HepG2 (cell line): ENCODE measurements at regions of chr17 and their contacts with region 1.

Region 1: GRCh38 chr17:65588176-65588808 is 26.8 kb upstream of the AXIN2 start:
- DNase-seq: peak; percentile 99
- ATAC-seq: peak; percentile 81
- H3K4me3 ChIP-seq: peak overlapping the region; percentile 3 to 47 (median 25); a peak in 3 of 6 replicates
- H3K27ac ChIP-seq: peak overlapping the region; percentile 14
- H3K4me1 ChIP-seq: peaks cover 82% of the 10 kb centered on the region
- H3K27me3 ChIP-seq: no peaks in the 10 kb centered on the region
- CTCF ChIP-seq: peak; percentile 58
- EP300 ChIP-seq: peak in 1 of 2 experiments; percentile 90; a peak in 2 of 4 replicates
- POLR2A ChIP-seq: no peak
- RAD21 ChIP-seq: peak; percentile 67; the same call in 1 of the 2 replicates

Region 2: GRCh38 chr17:65627891-65628659 is 39.8 kb after region 1 on chr17:
- CTCF ChIA-PET with region 1: no interaction called
- POLR2A ChIA-PET with region 1: interaction called, 12 read pairs
- in situ Hi-C with region 1: no loop called
- intact Hi-C with region 1: loop called (anchors 2 kb)
- DNase-seq: peak; percentile 91
- ATAC-seq: peak; percentile 97
- H3K4me3 ChIP-seq: peak overlapping the region in 1 of 3 experiments; percentile 12; a peak in 1 of 6 replicates
- H3K27ac ChIP-seq: peak overlapping the region; percentile 3
- H3K4me1 ChIP-seq: peaks cover 38% of the 10 kb centered on the region
- H3K27me3 ChIP-seq: no peaks in the 10 kb centered on the region
- CTCF ChIP-seq: no peak
- EP300 ChIP-seq: peak in 1 of 2 experiments; percentile 80; a peak in 2 of 4 replicates
- POLR2A ChIP-seq: no peak
- RAD21 ChIP-seq: no peak

Region 3: DNA sequence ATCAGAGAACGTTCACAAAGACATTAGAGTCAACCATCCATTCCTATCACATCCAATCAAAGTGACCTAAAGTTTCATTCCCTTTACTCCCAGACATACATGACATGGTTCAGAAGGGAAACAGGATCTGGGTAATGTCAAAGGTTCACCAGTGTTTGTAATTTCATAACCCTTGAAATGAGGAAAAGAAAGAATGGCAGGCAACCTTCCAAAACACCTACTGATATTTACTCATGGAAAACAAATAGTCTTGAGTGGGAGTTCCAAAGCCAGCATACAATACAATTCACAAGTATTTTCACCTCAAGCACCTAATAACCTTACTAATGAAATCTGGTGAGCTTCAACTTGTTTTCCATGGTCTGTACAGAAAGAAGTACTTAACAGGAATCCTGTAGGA is 45.7 kb after region 1 on chr17:
- CTCF ChIA-PET with region 1: no interaction called
- POLR2A ChIA-PET with region 1: interaction called, 12 read pairs
- in situ Hi-C with region 1: no loop called
- intact Hi-C with region 1: loop called (anchors 2 kb)
- DNase-seq: peak; percentile 89
- ATAC-seq: peak; percentile 55
- H3K4me3 ChIP-seq: peak overlapping the region in 1 of 3 experiments; percentile 2; a peak in 2 of 6 replicates
- H3K27ac ChIP-seq: no peak overlapping the region
- H3K4me1 ChIP-seq: peaks cover 61% of the 10 kb centered on the region
- H3K27me3 ChIP-seq: no peaks in the 10 kb centered on the region
- CTCF ChIP-seq: no peak
- EP300 ChIP-seq: peak in 1 of 2 experiments; percentile 84; a peak in 2 of 4 replicates
- POLR2A ChIP-seq: no peak
- RAD21 ChIP-seq: no peak

Region 4: GRCh38 chr17:65664266-65664665 is 76.0 kb after region 1 on chr17:
- CTCF ChIA-PET with region 1: no interaction called
- POLR2A ChIA-PET with region 1: no interaction called
- in situ Hi-C with region 1: no loop called
- intact Hi-C with region 1: no loop called
- DNase-seq: no peak
- ATAC-seq: no peak
- H3K4me3 ChIP-seq: no peak overlapping the region
- H3K27ac ChIP-seq: no peak overlapping the region
- H3K4me1 ChIP-seq: peaks cover 19% of the 10 kb centered on the region; the same call in 1 of the 2 replicates
- H3K27me3 ChIP-seq: no peaks in the 10 kb centered on the region
- CTCF ChIP-seq: no peak
- EP300 ChIP-seq: no peak
- POLR2A ChIP-seq: no peak
- RAD21 ChIP-seq: no peak